Gastrocnemius medialis (tissue), 4 donors: ENCODE measurements at regions of chr4 and their contacts with region 1.

Region 1: GRCh38 chr4:113394730-113395530 is 345.5 kb downstream of the ANK2 start:
- DNase-seq: peak; percentile 19 to 52
- ATAC-seq: peak; percentile 97 to 99
- H3K4me3 ChIP-seq: no peak overlapping the region
- H3K27ac ChIP-seq: no peak overlapping the region
- H3K4me1 ChIP-seq: peaks cover 0 to 7% of the 10 kb centered on the region in 2 donors
- H3K27me3 ChIP-seq: no peaks in the 10 kb centered on the region
- CTCF ChIP-seq: peak; percentile 82 to 93 (median 88)
- POLR2A ChIP-seq: no peak

Region 2: GRCh38 chr4:113534711-113535110 is 139.8 kb after region 1 on chr4:
- in situ Hi-C with region 1: no loop called
- intact Hi-C with region 1: loop called (anchors 5 kb)
- DNase-seq: no peak
- ATAC-seq: no peak
- H3K4me3 ChIP-seq: no peak overlapping the region
- H3K27ac ChIP-seq: no peak overlapping the region
- H3K4me1 ChIP-seq: peaks cover 6 to 22% of the 10 kb centered on the region in 2 donors
- H3K27me3 ChIP-seq: no peaks in the 10 kb centered on the region
- CTCF ChIP-seq: no peak
- POLR2A ChIP-seq: no peak

Region 3: DNA sequence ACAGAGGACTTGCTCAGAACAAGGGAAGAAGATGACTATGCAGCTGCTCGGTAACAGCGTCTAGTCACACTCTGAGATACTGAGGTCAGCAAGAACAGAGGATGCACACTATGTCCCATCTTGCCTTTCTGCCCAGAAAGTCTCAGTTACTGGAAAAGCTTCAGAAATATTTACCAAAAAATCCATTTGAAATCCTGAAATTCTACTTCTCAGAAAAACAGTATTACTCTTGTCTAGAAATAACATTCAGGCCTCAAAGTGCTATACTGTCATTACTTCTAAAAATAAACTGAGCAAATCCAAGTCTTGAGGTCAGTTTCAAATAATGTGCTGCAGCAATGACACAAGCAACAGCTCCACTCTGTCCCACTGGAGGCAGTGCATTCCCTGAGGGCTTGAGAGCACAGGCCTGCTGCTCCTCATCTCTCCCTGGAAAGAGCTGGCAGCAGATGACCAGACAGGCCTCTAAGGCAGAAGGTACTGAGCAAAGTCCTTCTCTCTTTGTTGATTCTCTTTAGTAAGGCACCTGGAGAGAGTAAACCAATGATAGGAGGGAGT is 289.7 kb after region 1 on chr4:
- in situ Hi-C with region 1: no loop called
- intact Hi-C with region 1: loop called (anchors 10 kb)
- DNase-seq: peak; percentile 61 to 88
- ATAC-seq: peak; percentile 97 to 98
- H3K4me3 ChIP-seq: no peak overlapping the region
- H3K27ac ChIP-seq: peak overlapping the region; percentile 75 to 80 (median 78)
- H3K4me1 ChIP-seq: peaks cover 39 to 50% of the 10 kb centered on the region in 2 donors
- H3K27me3 ChIP-seq: no peaks in the 10 kb centered on the region
- CTCF ChIP-seq: peak; percentile 28 to 73 (median 58)
- POLR2A ChIP-seq: peak in 1 of 2 donors; percentile 20

Region 4: DNA sequence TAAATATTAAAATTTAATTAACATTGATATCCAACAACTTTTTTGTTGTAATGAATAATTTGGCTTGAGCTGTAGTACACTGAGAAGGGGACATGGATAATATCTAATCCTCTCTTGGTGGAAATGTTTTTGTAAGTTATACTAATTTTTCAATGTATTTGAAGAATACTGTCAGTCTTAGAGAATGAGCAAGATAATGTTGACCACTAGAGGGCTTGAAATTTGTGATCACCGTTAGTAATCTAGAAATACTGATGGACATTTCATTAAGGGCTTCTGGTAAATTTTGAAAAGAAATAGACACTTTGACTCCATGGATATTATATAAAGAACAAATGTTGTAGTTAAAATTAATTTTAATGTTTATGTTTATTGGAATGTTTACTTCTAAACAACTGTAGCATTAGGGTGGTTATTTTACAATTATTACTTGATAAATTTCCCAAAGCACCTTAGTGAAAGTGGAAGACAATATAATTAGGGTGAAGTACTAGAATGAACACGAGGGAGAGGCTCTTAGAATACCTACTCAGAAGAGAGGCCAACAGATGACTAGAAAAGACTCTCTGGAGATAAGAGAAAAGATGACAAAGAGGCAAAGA is 386.6 kb after region 1 on chr4:
- in situ Hi-C with region 1: loop called in 2 of 4 experiments (anchors 10 to 25 kb)
- intact Hi-C with region 1: no loop called
- DNase-seq: no peak
- ATAC-seq: no peak
- H3K4me3 ChIP-seq: no peak overlapping the region
- H3K27ac ChIP-seq: no peak overlapping the region
- H3K4me1 ChIP-seq: no peaks in the 10 kb centered on the region
- H3K27me3 ChIP-seq: no peaks in the 10 kb centered on the region
- CTCF ChIP-seq: peak; percentile 27 to 63 (median 47)
- POLR2A ChIP-seq: no peak

Region 5: DNA sequence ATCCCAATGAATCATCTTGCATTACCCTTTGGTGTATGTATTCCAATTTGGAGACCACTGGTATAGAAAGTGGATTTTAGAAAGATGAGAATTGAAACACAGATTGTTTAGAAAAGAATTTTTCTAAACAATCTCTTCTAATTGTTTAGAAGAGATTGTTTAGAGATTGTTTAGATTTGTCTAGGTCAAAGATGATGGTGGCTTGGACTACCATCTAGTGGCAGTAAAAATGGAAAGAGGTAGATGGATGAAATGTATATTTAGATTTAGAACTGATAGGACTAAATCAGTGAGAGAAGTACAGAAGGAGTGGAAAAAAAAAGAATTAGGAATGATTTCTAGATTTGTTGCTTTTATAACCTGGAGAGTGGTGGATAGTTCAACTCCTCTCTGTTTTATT is 513.9 kb after region 1 on chr4:
- in situ Hi-C with region 1: loop called in 2 of 4 experiments (anchors 25 kb)
- intact Hi-C with region 1: loop called (anchors 5 kb)
- DNase-seq: no peak
- ATAC-seq: no peak
- H3K4me3 ChIP-seq: no peak overlapping the region
- H3K27ac ChIP-seq: no peak overlapping the region
- H3K4me1 ChIP-seq: no peaks in the 10 kb centered on the region
- H3K27me3 ChIP-seq: no peaks in the 10 kb centered on the region
- CTCF ChIP-seq: peak in 1 of 5 experiments; percentile 16
- POLR2A ChIP-seq: no peak

Region 6: DNA sequence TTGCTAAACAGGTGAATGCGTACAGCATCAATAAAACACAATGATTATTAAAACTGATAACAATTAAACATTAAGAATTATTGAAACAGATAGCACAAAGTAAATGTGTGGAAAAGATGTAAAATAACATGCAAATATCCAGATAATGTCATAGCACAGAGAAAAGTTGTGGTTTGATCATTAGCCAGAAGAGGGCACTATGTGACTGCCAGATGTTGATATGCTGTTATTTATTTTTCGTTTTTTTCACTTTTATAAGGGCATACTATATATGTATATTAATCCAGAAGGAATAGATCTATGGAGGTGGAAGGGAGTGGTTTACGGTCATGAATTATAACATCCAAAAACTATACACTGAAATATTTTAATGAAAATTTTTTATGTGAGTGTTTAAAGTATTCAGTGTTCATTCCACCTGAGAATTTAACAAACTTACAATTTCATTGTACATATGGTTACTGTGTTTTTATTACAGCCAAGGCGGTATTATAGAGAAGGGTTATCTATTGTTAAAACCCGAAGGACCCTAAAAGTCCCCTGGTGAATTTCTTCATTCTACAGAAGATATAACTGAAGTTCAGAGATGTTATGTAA is 991.8 kb after region 1 on chr4:
- in situ Hi-C with region 1: loop called in 1 of 4 experiments (anchors 25 kb)
- intact Hi-C with region 1: no loop called
- DNase-seq: no peak
- ATAC-seq: no peak
- H3K4me3 ChIP-seq: no peak overlapping the region
- H3K27ac ChIP-seq: no peak overlapping the region
- H3K4me1 ChIP-seq: no peaks in the 10 kb centered on the region
- H3K27me3 ChIP-seq: no peaks in the 10 kb centered on the region
- CTCF ChIP-seq: no peak
- POLR2A ChIP-seq: no peak

Region 7: DNA sequence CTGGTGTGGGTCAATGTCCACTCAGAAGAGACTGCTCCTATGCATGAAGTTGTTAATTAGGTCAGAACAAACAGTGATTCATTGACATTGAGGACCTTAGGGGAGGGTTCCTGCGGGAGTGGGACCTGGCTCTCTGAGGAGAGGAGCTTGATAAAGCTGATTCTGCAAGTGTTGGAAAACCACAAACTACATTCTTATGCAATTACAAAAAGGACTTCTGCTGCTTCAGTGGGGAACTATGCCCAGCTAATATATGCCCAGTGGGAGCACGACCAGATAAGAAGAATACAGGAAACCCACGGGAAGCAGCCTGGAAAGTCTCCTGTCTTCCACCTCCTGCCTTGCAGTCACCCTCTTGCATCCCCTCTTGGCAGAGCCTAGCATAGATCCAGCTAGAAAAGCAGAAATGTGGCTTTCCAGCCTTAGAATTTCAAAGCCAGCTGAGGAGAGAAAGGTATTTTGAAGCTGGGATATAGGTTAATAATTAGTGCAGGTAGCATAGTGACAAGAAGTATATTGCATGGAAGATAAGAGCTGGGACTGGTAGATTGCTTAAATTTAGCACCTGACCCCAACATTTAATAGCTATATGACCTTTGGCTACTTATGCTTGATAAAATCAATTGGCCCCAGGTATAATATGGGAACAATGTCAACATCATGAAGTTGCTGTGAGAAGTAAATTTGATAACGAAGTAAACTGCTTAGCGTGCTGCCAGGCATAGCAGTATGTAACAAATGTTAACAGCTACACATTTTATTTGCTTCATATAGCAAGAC is 1168.8 kb after region 1 on chr4:
- in situ Hi-C with region 1: no loop called
- intact Hi-C with region 1: no loop called
- DNase-seq: no peak
- ATAC-seq: no peak
- H3K4me3 ChIP-seq: no peak overlapping the region
- H3K27ac ChIP-seq: no peak overlapping the region
- H3K4me1 ChIP-seq: no peaks in the 10 kb centered on the region
- H3K27me3 ChIP-seq: no peaks in the 10 kb centered on the region
- CTCF ChIP-seq: no peak
- POLR2A ChIP-seq: no peak